Ovary (tissue), 10 donors: ENCODE measurements at regions of chr5 and their contacts with region 1.

Region 1: DNA sequence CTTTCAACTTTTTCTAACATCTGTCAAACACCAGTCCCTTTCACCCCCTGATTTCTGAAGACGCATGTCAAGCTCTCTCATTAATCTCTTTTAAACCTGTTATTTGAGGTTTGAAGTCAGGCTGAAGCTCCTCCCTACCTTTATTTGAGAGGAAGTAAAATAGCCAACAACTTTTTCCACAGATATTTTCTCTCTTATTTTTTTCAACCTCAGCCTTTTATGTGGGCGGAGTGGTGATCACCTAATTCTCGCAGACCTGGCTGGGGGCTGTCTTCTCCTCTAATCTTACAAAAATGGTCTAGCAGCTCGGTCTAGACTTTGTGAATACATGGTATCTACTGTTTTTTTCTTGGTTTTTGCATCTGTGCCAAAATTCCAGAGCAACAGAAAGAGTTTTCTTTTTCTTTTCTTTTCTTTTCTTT is 395.7 kb upstream of the ACTBL2 start:
- DNase-seq: no peak
- H3K4me3 ChIP-seq: no peak overlapping the region
- H3K27ac ChIP-seq: no peak overlapping the region
- H3K4me1 ChIP-seq: no peaks in the 10 kb centered on the region
- H3K27me3 ChIP-seq: no peaks in the 10 kb centered on the region
- CTCF ChIP-seq: no peak
- EP300 ChIP-seq: no peak
- POLR2A ChIP-seq: no peak

Region 2: GRCh38 chr5:56962286-56962685 is 916.0 kb before region 1 on chr5:
- intact Hi-C with region 1: loop called in 1 of 4 experiments (anchors 10 kb)
- DNase-seq: no peak
- H3K4me3 ChIP-seq: no peak overlapping the region
- H3K27ac ChIP-seq: no peak overlapping the region
- H3K4me1 ChIP-seq: no peaks in the 10 kb centered on the region
- H3K27me3 ChIP-seq: no peaks in the 10 kb centered on the region
- CTCF ChIP-seq: no peak
- EP300 ChIP-seq: no peak
- POLR2A ChIP-seq: no peak

Region 3: DNA sequence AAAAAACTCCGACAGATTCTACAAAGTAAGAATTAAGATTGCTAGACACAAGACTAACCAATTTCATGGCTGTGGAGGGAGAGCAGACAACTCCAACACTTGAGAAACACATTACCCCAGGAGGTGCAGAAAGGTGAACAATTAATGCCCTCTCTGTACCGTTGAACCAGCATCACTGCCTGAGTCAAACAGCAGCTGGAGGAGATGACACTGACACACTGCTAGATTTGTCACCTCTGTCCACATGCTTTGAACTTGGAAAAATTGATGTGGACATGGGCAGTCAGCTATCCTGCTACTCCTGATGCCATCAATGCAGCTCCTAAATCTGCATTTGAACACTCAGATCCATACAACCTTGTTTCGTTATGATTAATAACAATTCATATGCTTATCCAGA is 652.8 kb before region 1 on chr5:
- intact Hi-C with region 1: no loop called
- DNase-seq: no peak
- H3K4me3 ChIP-seq: no peak overlapping the region
- H3K27ac ChIP-seq: no peak overlapping the region
- H3K4me1 ChIP-seq: peaks cover 1% of the 10 kb centered on the region
- H3K27me3 ChIP-seq: no peaks in the 10 kb centered on the region
- CTCF ChIP-seq: no peak
- EP300 ChIP-seq: no peak
- POLR2A ChIP-seq: no peak

Region 4: GRCh38 chr5:57577432-57578175 is 300.7 kb before region 1 on chr5:
- intact Hi-C with region 1: no loop called
- DNase-seq: no peak
- H3K4me3 ChIP-seq: no peak overlapping the region
- H3K27ac ChIP-seq: no peak overlapping the region
- H3K4me1 ChIP-seq: peaks cover 2% of the 10 kb centered on the region
- H3K27me3 ChIP-seq: no peaks in the 10 kb centered on the region
- CTCF ChIP-seq: no peak
- EP300 ChIP-seq: no peak
- POLR2A ChIP-seq: no peak

Region 5: GRCh38 chr5:57736716-57737115 is 141.6 kb before region 1 on chr5:
- intact Hi-C with region 1: no loop called
- DNase-seq: no peak
- H3K4me3 ChIP-seq: no peak overlapping the region
- H3K27ac ChIP-seq: no peak overlapping the region
- H3K4me1 ChIP-seq: no peaks in the 10 kb centered on the region
- H3K27me3 ChIP-seq: no peaks in the 10 kb centered on the region
- CTCF ChIP-seq: no peak
- EP300 ChIP-seq: no peak
- POLR2A ChIP-seq: no peak

Region 6: GRCh38 chr5:59238126-59238902 is 1360.0 kb after region 1 on chr5:
- intact Hi-C with region 1: no loop called
- DNase-seq: no peak
- H3K4me3 ChIP-seq: no peak overlapping the region
- H3K27ac ChIP-seq: no peak overlapping the region
- H3K4me1 ChIP-seq: no peaks in the 10 kb centered on the region
- H3K27me3 ChIP-seq: no peaks in the 10 kb centered on the region
- CTCF ChIP-seq: no peak
- EP300 ChIP-seq: no peak
- POLR2A ChIP-seq: no peak